GM12878 (cell line): ENCODE measurements at regions of chr5 and their contacts with region 1.

Region 1: GRCh38 chr5:163943546-163943945 is 438.1 kb downstream of the MAT2B start:
- DNase-seq: no peak
- ATAC-seq: peak; percentile 45; the same call in 1 of the 3 replicates
- H3K4me3 ChIP-seq: no peak overlapping the region
- H3K27ac ChIP-seq: no peak overlapping the region
- H3K4me1 ChIP-seq: no peaks in the 10 kb centered on the region
- H3K27me3 ChIP-seq: no peaks in the 10 kb centered on the region
- CTCF ChIP-seq: no peak
- EP300 ChIP-seq: no peak
- POLR2A ChIP-seq: no peak
- RAD21 ChIP-seq: no peak

Region 2: DNA sequence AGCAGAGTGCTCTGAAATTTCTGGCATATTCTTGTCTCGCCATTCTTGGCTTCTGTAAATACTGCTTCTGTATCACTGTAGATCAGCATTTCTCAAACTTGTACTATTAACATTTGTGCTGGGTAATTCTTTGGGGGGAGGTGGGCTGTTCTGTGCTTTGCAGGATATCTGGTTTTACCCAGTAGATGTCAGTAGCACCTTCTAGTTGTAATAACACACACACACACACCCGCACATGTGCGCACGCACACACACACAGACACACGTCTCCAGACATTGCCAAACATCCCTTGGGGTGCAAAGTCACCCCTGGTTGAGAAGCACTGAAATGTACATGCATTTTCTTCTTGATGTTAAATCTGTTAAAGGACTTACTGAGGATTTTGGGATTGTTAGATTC is 134.1 kb before region 1 on chr5:
- CTCF ChIA-PET with region 1: no interaction called
- POLR2A ChIA-PET with region 1: no interaction called
- RAD21 ChIA-PET with region 1: no interaction called
- SMC1A ChIA-PET with region 1: no interaction called
- in situ Hi-C with region 1: no loop called
- intact Hi-C with region 1: no loop called
- DNase-seq: no peak
- ATAC-seq: no peak
- H3K4me3 ChIP-seq: no peak overlapping the region
- H3K27ac ChIP-seq: no peak overlapping the region
- H3K4me1 ChIP-seq: no peaks in the 10 kb centered on the region
- H3K27me3 ChIP-seq: no peaks in the 10 kb centered on the region
- CTCF ChIP-seq: no peak
- EP300 ChIP-seq: no peak
- POLR2A ChIP-seq: no peak
- RAD21 ChIP-seq: no peak

Region 3: GRCh38 chr5:163915481-163915961 is 28.0 kb before region 1 on chr5:
- CTCF ChIA-PET with region 1: interaction called, 3 read pairs
- POLR2A ChIA-PET with region 1: interaction called, 6 read pairs
- RAD21 ChIA-PET with region 1: interaction called, 5 read pairs
- SMC1A ChIA-PET with region 1: interaction called, 15 read pairs
- in situ Hi-C with region 1: no loop called
- intact Hi-C with region 1: no loop called
- DNase-seq: peak; percentile 62
- ATAC-seq: peak; percentile 86
- H3K4me3 ChIP-seq: peak overlapping the region; percentile 35
- H3K27ac ChIP-seq: peak overlapping the region; percentile 61
- H3K4me1 ChIP-seq: peaks cover 20% of the 10 kb centered on the region
- H3K27me3 ChIP-seq: no peaks in the 10 kb centered on the region
- CTCF ChIP-seq: no peak
- EP300 ChIP-seq: no peak
- POLR2A ChIP-seq: no peak
- RAD21 ChIP-seq: no peak

Region 4: DNA sequence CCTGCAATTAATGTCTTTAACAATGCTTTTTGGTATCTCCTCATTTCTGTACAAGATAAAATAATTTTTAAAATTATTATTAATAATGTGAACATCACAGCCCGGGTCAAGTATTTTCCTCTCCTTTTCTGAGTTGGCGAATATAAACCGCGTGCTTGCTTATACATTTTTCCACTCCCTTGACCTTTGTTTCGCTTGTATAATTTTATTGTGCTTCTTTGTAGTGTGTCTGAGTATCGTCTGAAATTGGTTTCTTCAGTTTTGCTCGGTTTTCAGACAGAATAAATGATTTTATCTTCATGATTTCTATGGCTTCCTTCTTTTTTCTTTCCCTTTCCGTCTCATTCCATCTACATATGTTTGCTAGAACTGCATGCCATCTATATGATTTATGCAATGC is 10.4 kb after region 1 on chr5:
- CTCF ChIA-PET with region 1: interaction called, 5 read pairs
- POLR2A ChIA-PET with region 1: no interaction called
- RAD21 ChIA-PET with region 1: interaction called, 3 read pairs
- SMC1A ChIA-PET with region 1: interaction called, 18 read pairs
- in situ Hi-C with region 1: no loop called
- intact Hi-C with region 1: no loop called
- DNase-seq: no peak
- ATAC-seq: no peak
- H3K4me3 ChIP-seq: no peak overlapping the region
- H3K27ac ChIP-seq: no peak overlapping the region
- H3K4me1 ChIP-seq: no peaks in the 10 kb centered on the region
- H3K27me3 ChIP-seq: no peaks in the 10 kb centered on the region
- CTCF ChIP-seq: no peak
- EP300 ChIP-seq: no peak
- POLR2A ChIP-seq: no peak
- RAD21 ChIP-seq: no peak